ENCODE measurements at regions of chr16 and their contacts with region 1.

Region 1: GRCh38 chr16:81403616-81404373 is 40.8 kb upstream of the CMIP start:
- DNase-seq: peak; percentile 88 to 90 (median 89)
- ATAC-seq: peak; percentile 96 to 100 (median 98)
- H3K4me3 ChIP-seq: peak overlapping the region in 2 of 3 donors; percentile 29 to 40
- H3K27ac ChIP-seq: no peak overlapping the region
- H3K4me1 ChIP-seq: no peaks in the 10 kb centered on the region
- H3K27me3 ChIP-seq: no peaks in the 10 kb centered on the region
- CTCF ChIP-seq: peak; percentile 93 to 98 (median 96)
- POLR2A ChIP-seq: no peak

Region 2: DNA sequence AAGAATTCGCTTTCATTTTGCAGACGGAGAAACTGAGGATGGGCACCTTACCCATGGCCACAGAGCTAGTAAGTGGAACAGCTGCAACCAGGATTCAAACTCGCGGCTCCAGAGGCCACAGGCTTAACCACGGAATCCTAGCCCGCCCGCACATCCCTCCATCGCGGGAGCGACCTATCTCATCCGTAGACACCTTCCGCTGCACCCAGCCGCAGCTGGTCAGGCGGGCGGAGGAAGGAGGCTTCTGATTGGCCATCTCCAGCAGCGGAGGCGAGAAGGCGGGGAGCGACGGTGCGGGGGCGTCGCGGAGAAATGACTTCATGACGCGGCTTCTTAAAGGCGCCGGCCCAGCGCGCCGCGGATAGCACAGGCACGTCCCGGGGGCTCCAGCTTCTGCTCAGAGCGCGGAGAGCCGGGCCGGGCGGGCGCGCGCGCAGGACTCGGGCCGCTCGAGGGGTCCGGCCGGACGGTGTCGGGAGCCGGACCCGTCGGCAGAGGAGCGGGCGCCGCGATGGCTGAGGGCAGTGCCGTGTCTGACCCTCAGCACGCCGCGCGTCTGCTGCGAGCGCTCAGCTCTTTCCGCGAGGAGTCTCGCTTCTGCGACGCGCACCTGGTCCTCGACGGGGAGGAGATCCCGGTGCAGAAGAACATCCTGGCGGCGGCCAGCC is 89.1 kb before region 1 on chr16 and contains the start of gene GAN:
- intact Hi-C with region 1: no loop called
- DNase-seq: peak; percentile 96 to 97 (median 97)
- ATAC-seq: peak; percentile 97 to 98 (median 98)
- H3K4me3 ChIP-seq: peak within 1 kb of the TSS; percentile 77 to 93 (median 83)
- H3K27ac ChIP-seq: peak within 1 kb of the TSS; percentile 64 to 86 (median 69)
- H3K4me1 ChIP-seq: peaks cover 0 to 14% (median 7%) of the 10 kb centered on the region in 4 donors
- H3K27me3 ChIP-seq: no peaks in the 10 kb centered on the region
- CTCF ChIP-seq: no peak
- POLR2A ChIP-seq: peak; percentile 91
- total RNA-seq, gene GAN: 2.2 to 4.1 (median 3.4) TPM

Region 3: DNA sequence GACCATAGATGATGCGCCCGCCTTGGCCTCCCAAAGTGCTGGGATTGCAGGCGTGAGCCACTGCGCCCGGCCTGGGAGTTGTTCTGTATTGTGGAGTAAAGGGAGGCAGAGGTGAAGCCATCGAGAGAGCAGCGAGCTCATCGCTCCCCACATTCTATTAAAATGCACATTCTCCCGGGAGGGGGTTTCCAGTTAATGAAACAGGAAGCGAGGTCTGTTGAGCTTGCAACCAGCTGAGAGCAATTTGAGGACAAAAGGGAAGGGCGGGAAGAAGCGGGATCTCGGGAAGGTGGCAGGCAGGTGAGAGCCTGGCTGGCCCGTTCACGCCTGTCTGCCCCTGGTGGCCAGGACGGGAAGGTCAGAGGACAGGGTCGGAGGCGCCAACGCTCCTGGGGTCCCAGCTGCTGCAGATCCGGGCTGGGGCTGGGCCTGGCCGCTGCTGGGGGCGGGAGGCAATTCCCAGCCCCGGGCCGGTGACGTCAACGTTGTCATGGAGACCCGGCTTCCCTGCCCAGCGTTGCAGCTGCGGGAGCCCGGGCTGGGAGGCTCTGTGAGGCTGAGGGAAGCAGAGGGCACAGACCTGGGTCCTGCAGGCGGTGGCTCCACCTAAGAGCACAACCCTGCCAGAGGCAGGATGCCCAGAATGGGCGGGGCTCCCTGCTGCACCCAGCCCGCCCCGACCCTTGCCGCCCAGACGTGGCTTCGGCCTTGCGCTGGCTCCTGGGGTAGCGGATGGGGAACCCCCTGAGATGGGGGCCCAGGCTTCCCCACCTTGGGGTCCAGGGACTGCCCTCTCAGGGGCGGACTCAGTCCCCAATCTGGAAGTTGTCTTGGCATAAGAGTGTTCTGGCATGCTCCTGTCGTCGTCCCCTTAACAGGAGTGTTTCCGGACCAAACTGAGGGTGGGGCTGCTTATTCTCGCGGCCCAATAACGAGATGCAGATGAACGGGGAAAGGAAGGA is 326.6 kb after region 1 on chr16:
- intact Hi-C with region 1: loop called in 1 of 2 experiments (anchors 2 kb)
- DNase-seq: peak; percentile 89 to 92 (median 90)
- ATAC-seq: peak; percentile 91 to 96 (median 92)
- H3K4me3 ChIP-seq: peak overlapping the region; percentile 1 to 20 (median 17)
- H3K27ac ChIP-seq: peak overlapping the region in 1 of 3 donors; percentile 3
- H3K4me1 ChIP-seq: peaks cover 0 to 6% (median 0%) of the 10 kb centered on the region in 4 donors
- H3K27me3 ChIP-seq: no peaks in the 10 kb centered on the region
- CTCF ChIP-seq: peak; percentile 54 to 67 (median 62)
- POLR2A ChIP-seq: no peak

Measured in right lobe of liver (tissue), 6 donors.